IMR-90 (cell line): ENCODE measurements at regions of chr2 and their contacts with region 1.

Region 1: GRCh38 chr2:62774555-62775366 is 69.2 kb downstream of the EHBP1 start:
- DNase-seq: peak; percentile 63
- ATAC-seq: peak; percentile 83
- H3K4me3 ChIP-seq: no peak overlapping the region
- H3K27ac ChIP-seq: no peak overlapping the region
- H3K4me1 ChIP-seq: no peaks in the 10 kb centered on the region
- H3K27me3 ChIP-seq: no peaks in the 10 kb centered on the region
- CTCF ChIP-seq: peak; percentile 80
- POLR2A ChIP-seq: no peak
- RAD21 ChIP-seq: peak; percentile 88

Region 2: GRCh38 chr2:61910603-61911002 is 864.2 kb before region 1 on chr2:
- CTCF ChIA-PET with region 1: no interaction called
- POLR2A ChIA-PET with region 1: no interaction called
- dilution Hi-C with region 1: no loop called
- in situ Hi-C with region 1: no loop called
- intact Hi-C with region 1: loop called (anchors 5 kb)
- DNase-seq: no peak
- ATAC-seq: no peak
- H3K4me3 ChIP-seq: no peak overlapping the region
- H3K27ac ChIP-seq: no peak overlapping the region
- H3K4me1 ChIP-seq: no peaks in the 10 kb centered on the region
- H3K27me3 ChIP-seq: no peaks in the 10 kb centered on the region
- CTCF ChIP-seq: 0 out of 2 replicates have a peak, but pooled peaks have one; percentile 25
- POLR2A ChIP-seq: no peak
- RAD21 ChIP-seq: 0 out of 2 replicates have a peak, but pooled peaks have one; percentile 5

Region 3: DNA sequence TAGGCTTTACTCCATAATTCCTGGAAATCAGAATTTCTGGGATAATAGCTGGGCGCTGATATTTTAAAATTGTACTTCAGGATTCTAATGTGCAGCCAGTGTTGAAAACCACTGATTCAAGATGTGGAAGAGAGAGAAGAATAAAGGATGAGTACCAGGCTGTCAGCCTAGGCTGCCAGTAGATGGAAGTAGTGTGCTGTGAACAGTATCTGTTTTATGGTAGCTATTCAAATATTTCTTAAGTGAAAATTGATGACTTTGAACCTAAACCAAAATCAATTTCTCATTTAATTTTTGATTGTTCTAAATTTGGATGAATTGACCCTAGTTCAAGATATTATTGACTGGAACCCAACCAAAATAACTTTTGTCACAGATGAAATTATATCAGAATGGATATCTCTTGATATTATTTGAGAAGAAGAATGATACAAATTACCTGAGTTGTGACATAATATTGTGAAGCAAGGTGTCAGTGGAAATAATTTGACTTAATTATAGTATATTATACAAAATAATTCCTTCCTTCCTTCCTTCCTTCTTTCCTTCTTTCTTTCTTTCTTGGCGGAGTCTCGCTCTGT is 781.2 kb before region 1 on chr2:
- CTCF ChIA-PET with region 1: no interaction called
- POLR2A ChIA-PET with region 1: no interaction called
- dilution Hi-C with region 1: no loop called
- in situ Hi-C with region 1: loop called (anchors 25 kb)
- intact Hi-C with region 1: loop called (anchors 5 kb)
- DNase-seq: peak; percentile 62
- ATAC-seq: peak; percentile 81
- H3K4me3 ChIP-seq: no peak overlapping the region
- H3K27ac ChIP-seq: no peak overlapping the region
- H3K4me1 ChIP-seq: no peaks in the 10 kb centered on the region
- H3K27me3 ChIP-seq: no peaks in the 10 kb centered on the region
- CTCF ChIP-seq: peak; percentile 77
- POLR2A ChIP-seq: no peak
- RAD21 ChIP-seq: peak; percentile 80

Region 4: GRCh38 chr2:62195421-62196277 is 579.1 kb before region 1 on chr2 and contains the start of gene B3GNT2:
- CTCF ChIA-PET with region 1: no interaction called
- POLR2A ChIA-PET with region 1: no interaction called
- dilution Hi-C with region 1: no loop called
- in situ Hi-C with region 1: no loop called
- intact Hi-C with region 1: no loop called
- DNase-seq: peak; percentile 57
- ATAC-seq: peak; percentile 93
- H3K4me3 ChIP-seq: peak within 1 kb of the TSS; percentile 91
- H3K27ac ChIP-seq: peak within 1 kb of the TSS; percentile 90
- H3K4me1 ChIP-seq: no peaks in the 10 kb centered on the region
- H3K27me3 ChIP-seq: no peaks in the 10 kb centered on the region; the same call in 1 of the 2 replicates
- CTCF ChIP-seq: no peak
- POLR2A ChIP-seq: peak; percentile 59
- RAD21 ChIP-seq: no peak
- total RNA-seq, gene B3GNT2: 11.1 and 12.2 TPM in 2 replicates

Region 5: DNA sequence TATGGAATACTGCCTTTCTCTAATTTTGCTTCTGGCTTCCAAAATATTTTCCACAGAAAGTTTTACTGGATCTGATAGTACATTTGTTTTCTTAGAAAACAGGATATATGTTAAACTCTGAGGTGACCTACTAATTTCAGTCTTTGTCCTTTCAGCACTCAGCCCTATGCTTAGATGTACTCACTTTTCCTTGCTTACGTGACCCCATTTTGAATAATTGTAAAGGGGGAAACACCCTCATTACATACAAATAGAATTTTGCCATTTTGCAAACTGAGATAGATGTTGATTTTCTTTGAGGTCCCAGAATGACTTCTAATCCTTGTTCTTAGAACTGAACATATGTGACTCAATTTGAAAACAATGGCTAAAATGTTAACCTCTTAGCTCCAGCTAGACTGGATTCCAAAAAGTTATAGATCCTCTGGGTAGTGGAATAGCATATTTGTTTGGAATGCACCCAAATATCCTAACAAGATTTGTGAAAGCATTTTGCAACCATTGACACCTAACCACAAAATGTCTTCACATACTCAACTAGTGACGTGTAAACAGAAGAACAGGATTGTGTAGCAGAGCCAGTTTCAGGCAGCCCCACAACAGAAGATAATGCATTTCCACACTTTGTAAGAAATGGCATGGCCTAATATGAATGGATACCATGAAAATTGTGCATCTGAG is 114.0 kb before region 1 on chr2:
- CTCF ChIA-PET with region 1: no interaction called
- POLR2A ChIA-PET with region 1: no interaction called
- dilution Hi-C with region 1: no loop called
- in situ Hi-C with region 1: no loop called
- intact Hi-C with region 1: loop called (anchors 5 kb)
- DNase-seq: peak; percentile 89
- ATAC-seq: peak; percentile 27
- H3K4me3 ChIP-seq: no peak overlapping the region
- H3K27ac ChIP-seq: peak overlapping the region; percentile 49; the same call in 1 of the 2 replicates
- H3K4me1 ChIP-seq: peaks cover 16% of the 10 kb centered on the region
- H3K27me3 ChIP-seq: no peaks in the 10 kb centered on the region
- CTCF ChIP-seq: no peak
- POLR2A ChIP-seq: no peak
- RAD21 ChIP-seq: no peak

Region 6: DNA sequence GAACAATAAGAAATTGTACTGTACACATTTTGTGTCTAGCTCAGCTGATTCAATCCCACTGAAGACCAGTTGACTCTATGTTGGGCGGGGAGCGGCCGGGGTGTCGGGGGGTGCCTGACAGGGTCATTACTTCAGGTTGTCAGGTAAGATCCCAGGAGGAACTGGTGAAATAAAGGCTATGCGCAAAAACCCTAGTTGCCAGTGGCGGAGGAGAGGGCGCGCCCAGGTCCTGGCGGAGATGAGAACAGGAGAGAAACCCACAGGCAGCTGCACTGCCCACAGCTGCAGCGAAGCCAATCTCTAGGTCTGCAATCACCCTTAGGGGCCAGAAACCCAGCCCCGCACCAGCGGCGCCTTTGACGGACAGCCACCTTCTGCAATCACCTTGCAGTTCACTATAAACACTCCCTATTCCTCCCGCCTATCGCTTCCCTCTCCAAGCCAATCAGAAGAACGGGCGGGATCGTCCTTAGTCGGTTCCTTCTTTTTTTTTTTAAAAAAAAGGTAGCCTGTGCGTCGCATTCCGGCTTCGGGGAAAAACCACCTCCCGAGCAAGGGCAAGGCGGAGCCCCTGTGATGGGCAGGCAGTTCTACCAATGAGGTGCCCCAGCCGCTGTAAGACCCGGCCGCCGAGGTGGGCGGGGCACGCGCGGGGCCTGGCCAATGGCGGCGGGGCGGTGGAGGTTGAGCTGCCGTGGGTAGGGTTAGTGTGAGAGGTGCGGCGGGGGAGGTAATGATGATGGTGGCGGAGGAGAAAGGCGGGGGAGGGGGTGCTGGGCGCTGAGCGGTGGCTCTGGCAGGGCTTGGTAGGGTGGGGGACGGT is 69.5 kb before region 1 on chr2 and contains the start of gene EHBP1:
- CTCF ChIA-PET with region 1: no interaction called
- POLR2A ChIA-PET with region 1: no interaction called
- dilution Hi-C with region 1: no loop called
- in situ Hi-C with region 1: no loop called
- intact Hi-C with region 1: loop called (anchors 2 kb)
- DNase-seq: peak; percentile 100
- ATAC-seq: peak; percentile 96
- H3K4me3 ChIP-seq: peak within 1 kb of the TSS; percentile 83
- H3K27ac ChIP-seq: peak within 1 kb of the TSS; percentile 84
- H3K4me1 ChIP-seq: peaks cover 4% of the 10 kb centered on the region; the same call in 1 of the 2 replicates
- H3K27me3 ChIP-seq: no peaks in the 10 kb centered on the region
- CTCF ChIP-seq: no peak
- POLR2A ChIP-seq: 0 out of 2 replicates have a peak, but pooled peaks have one; percentile 37
- RAD21 ChIP-seq: no peak; the same call in 1 of the 2 replicates
- total RNA-seq, gene EHBP1: 44.4 and 55.0 TPM in 2 replicates

Region 7: GRCh38 chr2:63189026-63189425 is 414.3 kb after region 1 on chr2:
- CTCF ChIA-PET with region 1: no interaction called
- POLR2A ChIA-PET with region 1: no interaction called
- dilution Hi-C with region 1: no loop called
- in situ Hi-C with region 1: loop called (anchors 25 kb)
- intact Hi-C with region 1: no loop called
- DNase-seq: peak; percentile 44
- ATAC-seq: peak; percentile 94
- H3K4me3 ChIP-seq: no peak overlapping the region
- H3K27ac ChIP-seq: no peak overlapping the region
- H3K4me1 ChIP-seq: no peaks in the 10 kb centered on the region
- H3K27me3 ChIP-seq: no peaks in the 10 kb centered on the region
- CTCF ChIP-seq: peak; percentile 65
- POLR2A ChIP-seq: no peak
- RAD21 ChIP-seq: peak; percentile 66

Region 8: DNA sequence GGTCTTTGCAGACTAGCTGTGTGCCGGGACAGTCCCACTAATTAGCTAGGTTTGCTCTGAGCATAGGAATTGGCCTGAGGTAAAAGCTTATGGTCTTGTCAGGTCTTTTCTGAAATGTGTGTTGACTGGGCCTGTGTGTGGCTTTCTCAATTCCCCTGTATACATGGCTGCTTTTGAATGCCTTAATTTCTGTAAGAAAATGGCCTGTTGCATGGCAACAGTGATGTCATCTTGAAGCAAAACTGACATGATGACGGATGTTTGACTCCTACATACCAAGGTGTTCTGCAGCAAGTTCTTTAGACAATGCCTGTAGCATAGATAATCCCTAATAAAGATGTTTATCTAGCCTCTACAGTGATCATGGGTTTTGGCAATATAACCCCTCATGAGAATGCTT is 474.4 kb after region 1 on chr2:
- CTCF ChIA-PET with region 1: no interaction called
- POLR2A ChIA-PET with region 1: no interaction called
- dilution Hi-C with region 1: no loop called
- in situ Hi-C with region 1: no loop called
- intact Hi-C with region 1: no loop called
- DNase-seq: no peak
- ATAC-seq: no peak
- H3K4me3 ChIP-seq: no peak overlapping the region
- H3K27ac ChIP-seq: no peak overlapping the region
- H3K4me1 ChIP-seq: no peaks in the 10 kb centered on the region
- H3K27me3 ChIP-seq: no peaks in the 10 kb centered on the region
- CTCF ChIP-seq: no peak
- POLR2A ChIP-seq: no peak
- RAD21 ChIP-seq: no peak

Region 9: GRCh38 chr2:63488118-63488713 is 713.5 kb after region 1 on chr2:
- CTCF ChIA-PET with region 1: no interaction called
- POLR2A ChIA-PET with region 1: no interaction called
- dilution Hi-C with region 1: no loop called
- in situ Hi-C with region 1: loop called (anchors 25 kb)
- intact Hi-C with region 1: no loop called
- DNase-seq: peak; percentile 46
- ATAC-seq: peak; percentile 74; the same call in 1 of the 2 replicates
- H3K4me3 ChIP-seq: no peak overlapping the region
- H3K27ac ChIP-seq: no peak overlapping the region
- H3K4me1 ChIP-seq: no peaks in the 10 kb centered on the region
- H3K27me3 ChIP-seq: no peaks in the 10 kb centered on the region
- CTCF ChIP-seq: peak; percentile 69
- POLR2A ChIP-seq: no peak
- RAD21 ChIP-seq: peak; percentile 68